A673 (cell line): ENCODE measurements at regions of chr10 and their contacts with region 1.

Region 1: GRCh38 chr10:50322077-50322476 is 70.8 kb upstream of the ASAH2 start:
- DNase-seq: peak; percentile 59
- H3K4me3 ChIP-seq: no peak overlapping the region
- H3K27ac ChIP-seq: no peak overlapping the region
- H3K4me1 ChIP-seq: peaks cover 47% of the 10 kb centered on the region
- H3K27me3 ChIP-seq: no peaks in the 10 kb centered on the region
- CTCF ChIP-seq: no peak

Region 2: DNA sequence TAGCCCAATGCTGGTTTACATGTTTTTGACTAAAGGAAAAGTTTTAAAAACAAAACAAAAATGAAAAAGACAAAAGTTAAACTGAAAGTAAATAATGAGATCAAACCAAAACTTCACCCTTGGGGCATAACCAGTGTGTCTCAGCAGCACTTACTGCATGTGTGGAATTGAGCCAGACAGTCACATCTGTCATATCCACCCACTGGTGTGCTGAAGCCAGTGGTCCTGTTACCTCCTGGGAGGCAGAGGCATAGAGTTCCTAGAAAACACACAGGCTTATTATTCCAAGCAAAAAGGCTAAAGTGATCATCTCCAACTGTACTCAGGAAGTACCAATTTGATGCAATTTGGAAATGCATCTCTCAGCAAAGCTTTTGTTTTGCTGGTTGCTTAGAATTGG is 111.2 kb before region 1 on chr10:
- CTCF ChIA-PET with region 1: no interaction called
- POLR2A ChIA-PET with region 1: no interaction called
- intact Hi-C with region 1: no loop called
- DNase-seq: peak; percentile 52
- H3K4me3 ChIP-seq: no peak overlapping the region
- H3K27ac ChIP-seq: no peak overlapping the region
- H3K4me1 ChIP-seq: no peaks in the 10 kb centered on the region
- H3K27me3 ChIP-seq: peaks cover 11% of the 10 kb centered on the region
- CTCF ChIP-seq: no peak

Region 3: DNA sequence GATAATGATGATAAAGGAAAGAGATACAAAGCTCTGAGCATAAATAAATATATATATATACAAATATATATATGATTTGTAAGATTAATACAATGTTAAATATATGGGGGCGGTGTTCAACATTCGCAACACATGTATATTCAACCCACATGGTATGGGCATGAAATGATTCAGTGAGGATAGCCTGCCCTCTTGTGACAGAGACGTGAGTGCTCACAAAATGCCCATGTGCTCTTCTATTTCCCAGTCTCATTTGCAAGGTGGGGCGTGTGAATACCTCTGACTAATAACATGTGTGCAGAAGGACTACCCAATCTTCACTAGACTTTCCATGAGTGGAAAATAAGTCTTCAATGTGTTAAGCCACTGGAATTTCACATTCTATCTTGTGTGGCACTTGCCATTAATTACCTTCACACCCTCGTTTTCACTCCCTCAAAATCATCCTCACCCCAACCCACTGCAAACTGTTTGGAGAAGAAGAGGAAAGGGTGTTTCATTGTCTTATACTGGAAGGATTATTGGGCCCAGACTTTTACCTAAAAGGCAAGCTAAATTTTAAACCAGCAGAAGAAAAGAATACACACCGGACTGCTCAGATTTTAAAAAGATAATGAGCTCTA is 97.6 kb before region 1 on chr10:
- CTCF ChIA-PET with region 1: no interaction called
- POLR2A ChIA-PET with region 1: no interaction called
- intact Hi-C with region 1: no loop called
- DNase-seq: peak; percentile 80
- H3K4me3 ChIP-seq: no peak overlapping the region
- H3K27ac ChIP-seq: no peak overlapping the region
- H3K4me1 ChIP-seq: no peaks in the 10 kb centered on the region
- H3K27me3 ChIP-seq: peaks cover 16% of the 10 kb centered on the region
- CTCF ChIP-seq: peak; percentile 78

Region 4: DNA sequence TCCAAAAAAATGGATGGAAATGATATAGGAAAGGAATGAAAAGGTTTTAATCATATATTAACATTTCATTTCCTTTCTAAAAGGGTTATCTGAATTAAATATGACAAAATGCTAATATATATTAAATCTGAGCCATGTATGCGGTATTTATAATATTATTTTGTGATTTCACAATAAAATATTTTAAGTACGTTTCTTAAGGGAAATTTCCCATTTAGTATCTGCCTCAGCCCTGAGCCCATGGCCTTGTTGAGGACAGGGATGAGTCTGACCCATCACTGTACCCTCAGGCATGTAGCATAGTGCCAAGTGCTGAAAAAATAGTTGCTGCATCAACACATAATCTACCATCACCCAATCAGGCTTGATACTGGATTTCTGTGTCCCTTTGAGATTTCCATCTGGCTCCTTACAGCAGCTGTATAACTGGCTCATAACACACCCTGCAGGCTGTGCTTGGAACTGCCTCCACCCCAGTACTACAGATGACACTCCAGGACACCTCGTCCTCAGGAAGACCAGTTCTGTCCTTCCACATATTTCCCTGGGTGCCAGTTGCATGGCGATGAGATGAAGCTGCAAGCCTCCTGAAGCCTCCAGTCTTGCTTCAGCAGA is 11.4 kb before region 1 on chr10:
- CTCF ChIA-PET with region 1: interaction called, 3 read pairs
- POLR2A ChIA-PET with region 1: no interaction called
- intact Hi-C with region 1: loop called (anchors 1 kb)
- DNase-seq: peak; percentile 61
- H3K4me3 ChIP-seq: no peak overlapping the region
- H3K27ac ChIP-seq: no peak overlapping the region
- H3K4me1 ChIP-seq: peaks cover 3% of the 10 kb centered on the region
- H3K27me3 ChIP-seq: no peaks in the 10 kb centered on the region
- CTCF ChIP-seq: peak; percentile 65

Region 5: GRCh38 chr10:50968386-50969091 is 646.5 kb after region 1 on chr10:
- CTCF ChIA-PET with region 1: no interaction called
- POLR2A ChIA-PET with region 1: no interaction called
- intact Hi-C with region 1: no loop called
- DNase-seq: no peak
- H3K4me3 ChIP-seq: no peak overlapping the region
- H3K27ac ChIP-seq: no peak overlapping the region
- H3K4me1 ChIP-seq: no peaks in the 10 kb centered on the region
- H3K27me3 ChIP-seq: no peaks in the 10 kb centered on the region
- CTCF ChIP-seq: no peak